Prostate gland (tissue), 2 donors: ENCODE measurements at regions of chr20 and their contacts with region 1.

Region 1: DNA sequence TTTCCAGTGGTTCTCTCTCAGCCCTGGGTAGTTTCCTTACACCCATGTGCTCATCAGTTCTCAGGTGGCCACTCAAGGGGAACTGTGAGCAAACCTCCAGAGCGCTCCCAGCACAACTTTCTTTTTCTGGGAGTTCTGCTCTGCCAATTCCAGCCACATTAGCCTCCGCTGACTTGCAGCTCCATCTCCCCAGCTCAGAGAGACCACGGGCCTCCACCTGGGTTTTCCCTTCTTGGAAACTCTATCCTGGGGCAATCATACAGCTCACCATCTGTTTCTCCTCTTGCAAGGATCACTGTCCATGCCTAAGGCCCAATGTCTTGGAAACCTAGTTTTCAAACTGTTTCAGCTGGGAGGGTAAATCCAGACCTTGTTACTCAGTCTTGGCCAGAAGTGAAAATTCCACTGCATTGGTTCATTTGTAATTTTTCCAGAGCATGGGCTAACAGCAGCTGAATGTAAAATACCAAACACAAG is 129.9 kb downstream of the EYA2 start:
- DNase-seq: no peak
- H3K4me3 ChIP-seq: no peak overlapping the region
- H3K27ac ChIP-seq: no peak overlapping the region
- H3K4me1 ChIP-seq: peaks cover 6% of the 10 kb centered on the region
- H3K27me3 ChIP-seq: no peaks in the 10 kb centered on the region
- CTCF ChIP-seq: no peak
- POLR2A ChIP-seq: no peak

Region 2: GRCh38 chr20:46767127-46767761 is 257.3 kb before region 1 on chr20:
- intact Hi-C with region 1: no loop called
- DNase-seq: peak; percentile 20
- H3K4me3 ChIP-seq: no peak overlapping the region
- H3K27ac ChIP-seq: no peak overlapping the region
- H3K4me1 ChIP-seq: no peaks in the 10 kb centered on the region
- H3K27me3 ChIP-seq: no peaks in the 10 kb centered on the region
- CTCF ChIP-seq: peak; percentile 15 to 63 (median 50)
- POLR2A ChIP-seq: no peak

Region 3: DNA sequence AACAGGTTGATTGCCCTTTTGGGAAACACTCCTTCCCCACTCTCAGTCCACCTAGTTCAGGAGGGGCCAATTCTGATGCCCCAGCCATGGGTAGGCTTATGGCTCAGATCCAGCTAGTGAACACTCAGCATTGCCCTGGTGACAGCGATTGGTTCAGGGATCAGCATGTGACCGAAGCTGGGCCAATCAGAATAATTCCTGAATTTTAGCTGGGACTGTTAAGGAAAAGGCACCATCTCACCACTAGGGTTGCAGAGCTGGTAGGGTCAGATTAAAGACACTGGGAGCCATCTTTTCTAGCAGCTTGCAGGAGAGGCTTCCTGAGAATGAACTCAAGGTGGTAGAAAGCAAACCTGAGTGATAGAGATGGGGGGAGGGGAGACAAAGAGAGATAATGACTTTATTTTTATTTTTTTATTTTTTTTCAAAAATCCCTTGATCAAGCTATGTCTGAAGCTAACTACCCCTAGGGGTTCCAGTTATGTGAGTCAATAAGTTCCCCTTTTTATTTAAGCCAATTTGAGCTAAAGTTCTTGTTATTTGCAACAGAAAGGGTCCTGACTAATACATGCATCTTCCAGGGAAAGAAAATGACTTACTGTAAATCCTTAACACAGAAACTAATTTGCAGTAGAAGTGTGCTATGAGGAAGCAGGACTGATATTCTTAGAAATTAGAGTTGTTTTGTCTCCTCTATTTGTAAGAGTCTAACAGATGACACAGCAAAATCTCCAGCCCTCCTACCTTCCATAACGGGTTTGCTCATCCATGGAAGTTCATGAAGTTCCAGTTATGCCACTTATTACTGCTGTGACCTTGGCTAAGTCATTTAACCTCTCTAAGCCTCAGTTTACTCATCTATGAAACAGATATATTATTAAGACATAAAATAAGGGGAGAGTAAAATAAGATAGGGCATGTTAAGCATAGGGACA is 85.2 kb before region 1 on chr20:
- intact Hi-C with region 1: loop called (anchors 10 kb)
- DNase-seq: no peak
- H3K4me3 ChIP-seq: no peak overlapping the region
- H3K27ac ChIP-seq: no peak overlapping the region
- H3K4me1 ChIP-seq: peaks cover 3% of the 10 kb centered on the region
- H3K27me3 ChIP-seq: no peaks in the 10 kb centered on the region
- CTCF ChIP-seq: no peak
- POLR2A ChIP-seq: no peak